ENCODE measurements at regions of chr2 and their contacts with region 1.

Region 1: DNA sequence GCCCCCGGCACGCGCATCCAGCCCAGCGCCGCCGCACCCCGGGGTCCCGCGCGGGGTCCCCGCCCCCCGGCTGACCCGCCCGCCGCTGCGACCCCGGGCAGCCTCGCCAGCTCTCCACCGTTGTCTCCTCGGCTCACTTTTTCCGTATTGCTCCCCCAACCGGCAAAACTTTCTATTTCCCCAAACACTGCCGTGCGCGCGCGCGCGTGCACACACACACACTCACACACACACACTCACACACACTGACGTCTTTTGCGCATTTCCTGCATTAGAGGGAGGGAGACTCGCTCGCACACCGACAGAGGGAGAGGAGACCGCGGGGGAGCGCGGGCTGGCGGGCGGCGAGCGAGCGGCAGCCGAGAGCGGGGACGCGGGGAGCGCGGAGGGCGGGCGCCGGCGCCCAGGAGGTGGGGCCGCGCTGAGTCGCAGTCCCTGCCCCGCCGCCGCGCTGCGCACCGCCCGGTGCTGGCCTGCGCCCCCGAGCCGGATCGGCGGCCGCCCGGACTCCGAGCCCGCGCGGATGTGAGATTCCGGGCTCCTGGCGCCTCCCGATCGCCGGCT is 542 bp upstream of the PRKCE start:
- DNase-seq: peak; percentile 93 to 97 (median 96)
- ATAC-seq: peak; percentile 71 to 88 (median 82)
- H3K4me3 ChIP-seq: peak overlapping the region; percentile 54 to 95 (median 84)
- H3K27ac ChIP-seq: peak overlapping the region; percentile 97 to 100 (median 100)
- H3K4me1 ChIP-seq: peaks cover 4 to 43% (median 34%) of the 10 kb centered on the region in 12 donors
- H3K27me3 ChIP-seq: no peaks in the 10 kb centered on the region
- CTCF ChIP-seq: peak in 10 of 12 donors; percentile 9 to 56 (median 43)
- POLR2A ChIP-seq: peak in 1 of 2 donors; percentile 88

Region 2: DNA sequence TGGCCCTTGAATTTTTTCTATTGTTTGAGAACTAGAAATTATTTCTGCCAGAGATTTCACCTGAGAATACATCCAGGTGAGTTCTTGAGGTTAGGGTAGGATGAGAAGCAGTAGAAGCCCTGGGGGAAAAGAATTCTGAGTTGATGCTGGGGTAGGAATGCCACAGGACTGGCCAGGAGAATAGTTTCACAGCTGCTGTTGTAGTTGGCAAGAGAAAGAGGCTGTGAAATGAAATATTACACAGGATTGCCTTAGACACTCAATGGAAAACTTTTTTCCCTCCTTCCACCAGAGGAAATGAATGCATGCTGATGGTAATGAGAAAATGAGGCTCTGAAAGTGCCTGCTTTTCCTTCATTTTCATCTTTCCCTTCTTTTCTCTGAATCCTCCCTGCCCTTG is 55.1 kb after region 1 on chr2:
- intact Hi-C with region 1: loop called in 3 of 10 experiments (anchors 5 kb)
- DNase-seq: no peak
- ATAC-seq: peak in 1 of 4 donors; percentile 37
- H3K4me3 ChIP-seq: no peak overlapping the region
- H3K27ac ChIP-seq: peak overlapping the region in 2 of 12 donors; percentile 13 to 19
- H3K4me1 ChIP-seq: peaks cover 0 to 47% (median 20%) of the 10 kb centered on the region in 12 donors
- H3K27me3 ChIP-seq: no peaks in the 10 kb centered on the region
- CTCF ChIP-seq: no peak
- POLR2A ChIP-seq: no peak

Region 3: GRCh38 chr2:45771261-45771660 is 120.3 kb after region 1 on chr2:
- intact Hi-C with region 1: loop called in 4 of 10 experiments (anchors 2 to 5 kb)
- DNase-seq: peak; percentile 76 to 87 (median 81)
- ATAC-seq: peak; percentile 93 to 94 (median 94)
- H3K4me3 ChIP-seq: peak overlapping the region in 8 of 12 donors; percentile 20 to 43 (median 34)
- H3K27ac ChIP-seq: peak overlapping the region; percentile 55 to 81 (median 76)
- H3K4me1 ChIP-seq: peaks cover 0 to 73% (median 31%) of the 10 kb centered on the region in 12 donors
- H3K27me3 ChIP-seq: no peaks in the 10 kb centered on the region
- CTCF ChIP-seq: peak in 2 of 12 donors; percentile 10 to 12
- POLR2A ChIP-seq: no peak

Region 4: GRCh38 chr2:45821564-45822271 is 170.8 kb after region 1 on chr2:
- intact Hi-C with region 1: loop called in 1 of 10 experiments (anchors 2 kb)
- DNase-seq: peak in 4 of 5 donors; percentile 32 to 80 (median 44)
- ATAC-seq: peak; percentile 8 to 58 (median 46)
- H3K4me3 ChIP-seq: no peak overlapping the region
- H3K27ac ChIP-seq: peak overlapping the region in 10 of 12 donors; percentile 8 to 79 (median 56)
- H3K4me1 ChIP-seq: peaks cover 3 to 70% (median 32%) of the 10 kb centered on the region in 12 donors
- H3K27me3 ChIP-seq: no peaks in the 10 kb centered on the region
- CTCF ChIP-seq: no peak
- POLR2A ChIP-seq: no peak

Region 5: DNA sequence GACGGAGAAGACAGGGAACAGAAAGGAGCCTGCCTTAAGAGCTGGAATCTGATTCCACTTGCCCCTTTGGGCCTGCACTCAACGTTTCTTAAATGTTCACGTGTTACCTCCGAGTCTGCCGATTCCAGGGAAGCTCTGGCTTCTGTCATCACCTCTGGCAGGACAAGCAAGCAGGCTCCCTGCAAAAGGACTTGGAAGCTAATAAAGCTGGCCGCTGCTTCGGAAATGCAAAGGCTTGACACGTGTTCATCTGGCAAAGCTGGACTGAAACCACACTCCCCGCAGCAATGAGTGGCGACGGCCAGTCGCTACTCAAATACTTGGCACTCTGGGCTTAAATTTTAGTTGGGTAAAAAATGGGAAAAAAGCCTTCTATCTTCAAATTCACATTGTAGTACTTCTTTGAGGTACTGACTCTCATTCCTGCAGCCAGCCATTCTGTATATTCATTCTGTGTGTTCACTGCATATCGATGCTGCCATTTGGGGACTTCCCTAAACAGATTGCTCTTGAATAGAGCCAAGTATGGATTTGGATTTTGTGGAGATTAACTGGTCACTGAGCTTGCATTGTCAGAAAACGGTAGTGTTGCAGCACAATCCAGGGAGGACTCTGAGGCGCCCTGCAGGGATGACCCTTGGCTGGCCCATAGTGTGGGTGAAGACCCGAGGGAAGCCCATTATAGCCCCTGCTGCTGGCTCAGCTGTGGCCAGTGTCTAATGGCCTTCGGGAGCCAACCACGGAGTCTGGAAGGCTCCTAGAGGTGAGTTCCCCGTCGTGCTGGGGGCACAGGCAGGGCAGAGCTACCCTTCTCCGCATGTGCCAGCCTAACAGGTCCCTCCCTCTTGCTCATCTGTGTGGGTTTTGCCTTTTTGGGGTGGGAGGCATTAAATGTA is 232.0 kb after region 1 on chr2:
- intact Hi-C with region 1: loop called in 1 of 10 experiments (anchors 5 kb)
- DNase-seq: peak; percentile 56 to 91 (median 69)
- ATAC-seq: peak; percentile 58 to 85 (median 72)
- H3K4me3 ChIP-seq: no peak overlapping the region
- H3K27ac ChIP-seq: peak overlapping the region in 10 of 12 donors; percentile 13 to 77 (median 33)
- H3K4me1 ChIP-seq: peaks cover 0 to 75% (median 53%) of the 10 kb centered on the region in 12 donors
- H3K27me3 ChIP-seq: no peaks in the 10 kb centered on the region
- CTCF ChIP-seq: no peak
- POLR2A ChIP-seq: no peak